CD4-positive, alpha-beta T cell (primary cell): ENCODE measurements at regions of chr9 and their contacts with region 1.

Region 1: GRCh38 chr9:83622939-83623678 is at the start of gene IDNK:
- DNase-seq: peak; percentile 37 to 84 (median 52)
- ATAC-seq: peak; percentile 88
- H3K4me3 ChIP-seq: peak within 1 kb of the TSS; percentile 73
- H3K4me3 Mint-ChIP-seq: peak within 1 kb of the TSS; percentile 99
- H3K27ac ChIP-seq: peak within 1 kb of the TSS; percentile 78 to 86
- H3K27ac Mint-ChIP-seq: peak within 1 kb of the TSS; percentile 97
- H3K4me1 ChIP-seq: peaks cover 26% of the 10 kb centered on the region
- H3K4me1 Mint-ChIP-seq: peaks cover 28% of the 10 kb centered on the region
- H3K27me3 ChIP-seq: no peaks in the 10 kb centered on the region
- H3K27me3 Mint-ChIP-seq: no peaks in the 10 kb centered on the region
- CTCF ChIP-seq: no peak
- total RNA-seq, gene IDNK: 5.4 to 5.6 TPM

Region 2: GRCh38 chr9:83563360-83563759 is 59.7 kb before region 1 on chr9:
- CTCF ChIA-PET with region 1: no interaction called
- POLR2A ChIA-PET with region 1: no interaction called
- intact Hi-C with region 1: no loop called
- DNase-seq: no peak
- ATAC-seq: no peak
- H3K4me3 ChIP-seq: no peak overlapping the region
- H3K4me3 Mint-ChIP-seq: no peak overlapping the region
- H3K27ac ChIP-seq: no peak overlapping the region
- H3K27ac Mint-ChIP-seq: no peak overlapping the region
- H3K4me1 ChIP-seq: no peaks in the 10 kb centered on the region
- H3K4me1 Mint-ChIP-seq: no peaks in the 10 kb centered on the region
- H3K27me3 ChIP-seq: no peaks in the 10 kb centered on the region
- H3K27me3 Mint-ChIP-seq: no peaks in the 10 kb centered on the region
- CTCF ChIP-seq: no peak

Region 3: GRCh38 chr9:83583151-83584014 is 39.7 kb before region 1 on chr9:
- CTCF ChIA-PET with region 1: no interaction called
- POLR2A ChIA-PET with region 1: no interaction called
- intact Hi-C with region 1: no loop called
- DNase-seq: peak in 7 of 14 experiments; percentile 1 to 58 (median 29)
- ATAC-seq: peak; percentile 59
- H3K4me3 ChIP-seq: no peak overlapping the region
- H3K4me3 Mint-ChIP-seq: no peak overlapping the region
- H3K27ac ChIP-seq: no peak overlapping the region
- H3K27ac Mint-ChIP-seq: no peak overlapping the region
- H3K4me1 ChIP-seq: no peaks in the 10 kb centered on the region
- H3K4me1 Mint-ChIP-seq: no peaks in the 10 kb centered on the region
- H3K27me3 ChIP-seq: no peaks in the 10 kb centered on the region
- H3K27me3 Mint-ChIP-seq: no peaks in the 10 kb centered on the region
- CTCF ChIP-seq: peak; percentile 53

Region 4: DNA sequence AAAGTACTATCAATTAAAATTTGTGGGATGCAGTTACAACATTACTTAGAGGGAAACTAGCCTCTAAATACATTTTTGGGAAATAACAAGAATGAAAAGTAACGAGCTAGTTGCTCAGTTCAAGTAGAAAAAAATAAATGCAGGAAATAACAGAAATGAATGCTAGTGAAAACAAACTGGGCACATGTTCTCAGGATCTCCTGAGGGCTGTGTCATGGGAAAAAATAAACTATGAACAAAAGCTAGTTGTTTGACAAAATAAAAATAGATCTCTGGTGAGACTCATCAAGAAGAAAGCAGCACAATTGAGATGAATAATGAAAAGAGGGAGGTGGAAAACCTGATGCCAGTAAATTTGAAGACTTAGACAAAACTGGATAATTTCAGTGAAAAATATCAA is 16.2 kb after region 1 on chr9:
- CTCF ChIA-PET with region 1: interaction called, 7 read pairs
- POLR2A ChIA-PET with region 1: interaction called, 14 read pairs
- intact Hi-C with region 1: no loop called
- DNase-seq: no peak
- ATAC-seq: no peak
- H3K4me3 ChIP-seq: no peak overlapping the region
- H3K4me3 Mint-ChIP-seq: no peak overlapping the region
- H3K27ac ChIP-seq: no peak overlapping the region
- H3K27ac Mint-ChIP-seq: no peak overlapping the region
- H3K4me1 ChIP-seq: no peaks in the 10 kb centered on the region
- H3K4me1 Mint-ChIP-seq: no peaks in the 10 kb centered on the region
- H3K27me3 ChIP-seq: no peaks in the 10 kb centered on the region
- H3K27me3 Mint-ChIP-seq: no peaks in the 10 kb centered on the region
- CTCF ChIP-seq: no peak

Region 5: DNA sequence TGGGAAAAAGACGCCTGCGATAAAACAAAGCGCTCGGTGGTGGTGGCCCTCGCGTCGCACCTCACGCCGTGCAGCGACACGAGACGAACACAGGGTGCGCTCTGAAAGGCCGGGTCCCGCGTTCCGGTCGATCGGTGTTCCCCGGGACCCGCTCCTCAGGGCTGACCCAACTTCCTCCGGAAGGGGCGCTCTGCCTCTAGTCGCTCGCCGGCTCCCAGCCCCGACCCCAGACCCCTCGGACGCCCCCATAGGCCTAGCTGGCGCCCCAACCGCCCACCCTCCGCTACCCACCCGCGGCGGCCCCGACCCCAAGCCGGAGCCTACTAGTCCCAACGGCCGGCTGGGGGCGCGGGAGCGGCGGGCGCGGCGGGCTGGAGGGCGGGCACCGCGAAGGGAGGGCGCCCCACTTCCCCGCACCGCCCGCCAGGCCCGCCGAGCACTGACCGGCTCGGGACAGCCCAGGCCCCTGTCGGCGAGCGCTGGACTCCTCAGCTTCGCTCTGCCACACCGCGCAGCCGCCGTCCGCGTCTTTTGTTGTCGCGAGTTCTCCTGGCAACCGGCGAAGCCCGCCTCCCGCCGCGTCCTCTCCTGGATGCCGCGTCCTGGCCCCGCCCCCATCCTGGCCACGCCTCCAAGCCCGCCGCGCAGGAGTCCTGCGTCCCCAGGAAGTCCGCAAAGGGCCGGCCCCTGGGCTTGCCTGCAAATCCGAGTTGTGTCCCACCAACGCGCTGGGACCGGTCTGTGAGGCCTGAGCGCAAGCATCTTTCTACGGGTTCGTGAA is 298.0 kb after region 1 on chr9 and contains the start of gene KIF27:
- CTCF ChIA-PET with region 1: interaction called, 4 read pairs
- POLR2A ChIA-PET with region 1: interaction called, 23 read pairs
- intact Hi-C with region 1: loop called in 1 of 2 experiments (anchors 2 kb)
- DNase-seq: peak; percentile 91 to 97 (median 95)
- ATAC-seq: peak; percentile 83
- H3K4me3 ChIP-seq: peak within 1 kb of the TSS; percentile 69
- H3K4me3 Mint-ChIP-seq: peak within 1 kb of the TSS; percentile 98
- H3K27ac ChIP-seq: peak within 1 kb of the TSS; percentile 85 to 91
- H3K27ac Mint-ChIP-seq: peak within 1 kb of the TSS; percentile 91
- H3K4me1 ChIP-seq: peaks cover 14% of the 10 kb centered on the region
- H3K4me1 Mint-ChIP-seq: peaks cover 17% of the 10 kb centered on the region
- H3K27me3 ChIP-seq: no peaks in the 10 kb centered on the region
- H3K27me3 Mint-ChIP-seq: no peaks in the 10 kb centered on the region
- CTCF ChIP-seq: peak; percentile 79
- total RNA-seq, gene KIF27: 3.6 to 5.1 TPM